ENCODE measurements at regions of chr11 and their contacts with region 1.

Region 1: DNA sequence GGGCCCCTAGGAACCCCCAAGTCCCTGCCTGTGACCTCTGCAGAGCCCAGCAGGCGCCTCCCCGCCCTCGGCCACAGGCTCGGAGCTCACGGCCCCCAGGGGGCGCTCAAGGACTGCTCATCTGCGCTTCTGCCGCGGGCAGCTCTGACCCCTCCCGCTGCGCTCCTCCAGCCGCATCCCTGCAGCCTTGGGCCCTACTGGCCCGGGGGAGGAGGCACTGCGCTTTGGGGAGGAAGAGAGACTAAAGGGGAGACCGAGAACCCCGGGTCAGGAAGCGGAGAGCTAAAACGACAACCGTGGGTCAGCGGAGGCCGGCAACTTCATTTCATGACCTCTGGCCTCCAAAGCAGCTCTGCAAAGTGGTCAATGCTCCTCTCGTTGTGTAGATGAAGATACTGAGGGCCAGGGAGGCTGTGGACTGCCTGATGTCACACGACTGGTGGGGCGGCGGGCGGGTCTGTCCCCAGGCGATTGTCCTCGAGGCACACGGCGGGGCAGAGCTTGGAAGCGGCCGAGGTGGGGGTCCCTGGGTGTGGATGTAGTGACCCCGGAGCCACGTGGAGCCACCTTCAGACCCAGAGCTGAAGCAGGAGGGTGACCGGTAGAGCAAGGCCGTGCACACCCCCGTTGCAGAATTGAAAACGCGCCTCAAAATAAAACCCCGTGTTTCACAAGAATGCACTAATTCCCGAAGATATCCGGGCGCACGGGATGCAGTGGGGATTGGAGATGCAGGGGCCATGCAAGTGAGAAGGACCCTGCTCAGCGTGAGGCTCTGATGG is 2.7 kb upstream of the KRTAP5-6 start:
- DNase-seq: peak; percentile 79 to 84 (median 81)
- H3K4me3 ChIP-seq: peak overlapping the region in 1 of 3 experiments; percentile 57
- H3K4me3 Mint-ChIP-seq: peak overlapping the region in 1 of 2 donors; percentile 78
- H3K27ac ChIP-seq: no peak overlapping the region
- H3K27ac Mint-ChIP-seq: no peak overlapping the region
- H3K4me1 ChIP-seq: peaks cover 10 to 14% of the 10 kb centered on the region in 2 donors
- H3K4me1 Mint-ChIP-seq: peaks cover 5% of the 10 kb centered on the region
- H3K27me3 ChIP-seq: peaks cover 0 to 43% of the 10 kb centered on the region in 2 donors
- H3K27me3 Mint-ChIP-seq: peaks cover 37 to 67% (median 44%) of the 10 kb centered on the region in 3 donors
- CTCF ChIP-seq: peak; percentile 67

Region 2: GRCh38 chr11:1608363-1608762 is 85.9 kb before region 1 on chr11 and contains the start of gene KRTAP5-3:
- intact Hi-C with region 1: no loop called
- DNase-seq: no peak
- H3K4me3 ChIP-seq: no peak within 1 kb of the TSS
- H3K4me3 Mint-ChIP-seq: no peak within 1 kb of the TSS
- H3K27ac ChIP-seq: no peak within 1 kb of the TSS
- H3K27ac Mint-ChIP-seq: peak within 1 kb of the TSS in 1 of 7 donors; percentile 43
- H3K4me1 ChIP-seq: no peaks in the 10 kb centered on the region
- H3K4me1 Mint-ChIP-seq: no peaks in the 10 kb centered on the region
- H3K27me3 ChIP-seq: peaks cover 0 to 3% of the 10 kb centered on the region in 2 donors
- H3K27me3 Mint-ChIP-seq: peaks cover 13 to 26% (median 25%) of the 10 kb centered on the region in 3 donors
- CTCF ChIP-seq: no peak
- polyA plus RNA-seq, gene KRTAP5-3: not detected

Region 3: GRCh38 chr11:1652771-1653540 is 41.3 kb before region 1 on chr11:
- intact Hi-C with region 1: loop called (anchors 5 kb)
- DNase-seq: peak; percentile 51 to 61 (median 56)
- H3K4me3 ChIP-seq: no peak overlapping the region
- H3K4me3 Mint-ChIP-seq: peak overlapping the region in 1 of 2 donors; percentile 51
- H3K27ac ChIP-seq: no peak overlapping the region
- H3K27ac Mint-ChIP-seq: no peak overlapping the region
- H3K4me1 ChIP-seq: no peaks in the 10 kb centered on the region
- H3K4me1 Mint-ChIP-seq: peaks cover 3% of the 10 kb centered on the region
- H3K27me3 ChIP-seq: peaks cover 0 to 18% of the 10 kb centered on the region in 2 donors
- H3K27me3 Mint-ChIP-seq: peaks cover 15 to 40% (median 19%) of the 10 kb centered on the region in 3 donors
- CTCF ChIP-seq: peak; percentile 98

Region 4: GRCh38 chr11:1832211-1832919 is 138.1 kb after region 1 on chr11:
- intact Hi-C with region 1: loop called (anchors 1 kb)
- DNase-seq: peak in 2 of 3 donors; percentile 44 to 52
- H3K4me3 ChIP-seq: peak overlapping the region in 2 of 3 experiments; percentile 22 to 64
- H3K4me3 Mint-ChIP-seq: peak overlapping the region; percentile 58 to 72
- H3K27ac ChIP-seq: no peak overlapping the region
- H3K27ac Mint-ChIP-seq: no peak overlapping the region
- H3K4me1 ChIP-seq: peaks cover 8 to 14% of the 10 kb centered on the region in 2 donors
- H3K4me1 Mint-ChIP-seq: peaks cover 8% of the 10 kb centered on the region
- H3K27me3 ChIP-seq: peaks cover 0 to 47% of the 10 kb centered on the region in 2 donors
- H3K27me3 Mint-ChIP-seq: peaks cover 43 to 74% (median 43%) of the 10 kb centered on the region in 3 donors
- CTCF ChIP-seq: peak; percentile 100

Region 5: DNA sequence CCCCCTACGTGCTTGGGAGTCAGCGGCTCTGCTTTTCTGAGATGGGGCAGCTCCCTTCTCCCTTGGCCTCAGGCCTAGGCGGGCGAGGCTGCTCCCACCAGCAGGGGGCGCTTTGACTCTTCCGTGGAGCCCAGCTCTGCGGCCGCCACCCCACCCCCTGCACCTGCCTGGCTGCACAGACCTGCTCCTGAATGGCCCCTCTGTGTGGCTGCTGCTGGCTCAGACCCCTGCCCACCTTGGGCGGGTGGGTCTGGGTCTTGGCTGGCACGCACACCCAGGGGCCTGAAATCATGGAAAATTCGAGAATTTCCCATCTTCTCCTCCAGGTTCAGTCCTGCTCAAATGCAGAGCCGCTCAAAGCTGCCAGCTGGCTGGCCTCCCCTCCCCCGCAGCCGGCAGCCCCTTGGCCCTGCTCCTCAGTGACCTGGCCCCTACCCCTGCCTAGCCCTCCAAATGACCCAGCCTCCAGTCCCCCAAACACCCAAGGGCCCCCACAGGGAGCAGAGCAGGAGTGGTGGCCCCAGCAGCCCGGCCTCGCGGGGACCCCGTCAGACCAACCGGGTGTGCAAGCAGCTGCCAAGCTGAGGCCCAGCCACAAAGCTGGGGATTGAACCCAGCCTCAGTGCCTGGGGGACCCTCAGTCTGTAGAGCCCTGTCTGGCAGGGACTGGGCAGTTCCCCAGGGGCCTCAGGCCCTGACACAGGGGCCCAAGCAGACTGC is 188.4 kb after region 1 on chr11:
- intact Hi-C with region 1: loop called in 1 of 2 experiments (anchors 10 kb)
- DNase-seq: peak; percentile 51 to 66 (median 64)
- H3K4me3 ChIP-seq: no peak overlapping the region
- H3K4me3 Mint-ChIP-seq: no peak overlapping the region
- H3K27ac ChIP-seq: peak overlapping the region in 1 of 2 donors; percentile 26
- H3K27ac Mint-ChIP-seq: no peak overlapping the region
- H3K4me1 ChIP-seq: peaks cover 34 to 40% of the 10 kb centered on the region in 2 donors
- H3K4me1 Mint-ChIP-seq: peaks cover 33% of the 10 kb centered on the region
- H3K27me3 ChIP-seq: peaks cover 0 to 4% of the 10 kb centered on the region in 2 donors
- H3K27me3 Mint-ChIP-seq: peaks cover 4 to 12% (median 5%) of the 10 kb centered on the region in 3 donors
- CTCF ChIP-seq: peak; percentile 91

Measured in CD14-positive monocyte (primary cell).